Aorta (tissue), 5 donors: ENCODE measurements at regions of chr14 and their contacts with region 1.

Region 1: GRCh38 chr14:64117671-64118402 is 176.3 kb downstream of the ESR2 start:
- DNase-seq: peak; percentile 89 to 92
- ATAC-seq: peak; percentile 90
- H3K4me3 ChIP-seq: no peak overlapping the region
- H3K27ac ChIP-seq: peak overlapping the region; percentile 93 to 94
- H3K4me1 ChIP-seq: peaks cover 0 to 11% of the 10 kb centered on the region in 2 donors
- H3K27me3 ChIP-seq: no peaks in the 10 kb centered on the region

Region 2: GRCh38 chr14:64040044-64040443 is 77.8 kb before region 1 on chr14:
- intact Hi-C with region 1: loop called in 1 of 2 experiments (anchors 5 kb)
- DNase-seq: no peak
- ATAC-seq: no peak
- H3K4me3 ChIP-seq: no peak overlapping the region
- H3K27ac ChIP-seq: no peak overlapping the region
- H3K4me1 ChIP-seq: peaks cover 0 to 3% of the 10 kb centered on the region in 2 donors
- H3K27me3 ChIP-seq: no peaks in the 10 kb centered on the region

Region 3: DNA sequence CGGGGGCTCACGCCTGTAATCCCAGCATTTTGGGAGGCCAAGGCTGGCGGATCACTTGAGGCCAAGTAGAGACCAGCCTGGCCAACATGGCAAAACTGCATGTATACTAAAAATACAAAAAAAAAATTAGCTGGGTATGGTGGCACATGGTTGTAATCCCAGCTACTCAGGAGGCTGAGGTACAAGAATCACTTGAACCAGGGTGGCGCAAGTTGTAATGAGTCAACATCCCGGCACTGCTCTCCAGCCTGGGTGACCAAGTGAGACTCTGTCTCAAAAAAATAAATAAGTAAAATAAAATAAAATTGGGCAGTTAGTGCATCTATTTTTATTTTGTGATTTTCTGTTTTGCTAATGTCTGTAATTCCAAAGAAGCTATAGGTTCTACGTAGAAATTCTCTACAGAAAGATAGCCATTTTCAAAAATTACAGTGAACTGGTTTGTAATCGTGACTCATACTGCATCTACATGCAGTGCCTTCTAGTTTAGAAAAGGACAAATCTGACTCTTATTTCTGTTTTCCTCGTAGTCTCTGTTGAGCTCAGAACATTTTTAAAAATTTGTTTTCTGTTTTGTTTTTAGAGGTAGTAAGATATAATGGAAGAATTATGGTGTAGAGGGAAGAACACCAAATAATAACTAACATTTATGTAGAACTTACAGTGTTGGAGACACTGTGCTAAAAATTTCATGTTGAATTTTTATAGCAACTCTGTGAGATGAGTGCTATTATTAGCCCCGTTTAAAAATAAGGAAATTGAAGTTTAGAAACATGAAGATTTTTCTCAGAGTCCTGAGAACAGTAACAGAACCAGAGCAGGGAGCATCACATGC is 63.9 kb before region 1 on chr14:
- intact Hi-C with region 1: loop called (anchors 5 kb)
- DNase-seq: no peak
- ATAC-seq: peak; percentile 56
- H3K4me3 ChIP-seq: no peak overlapping the region
- H3K27ac ChIP-seq: peak overlapping the region; percentile 76 to 82
- H3K4me1 ChIP-seq: no peaks in the 10 kb centered on the region
- H3K27me3 ChIP-seq: no peaks in the 10 kb centered on the region

Region 4: DNA sequence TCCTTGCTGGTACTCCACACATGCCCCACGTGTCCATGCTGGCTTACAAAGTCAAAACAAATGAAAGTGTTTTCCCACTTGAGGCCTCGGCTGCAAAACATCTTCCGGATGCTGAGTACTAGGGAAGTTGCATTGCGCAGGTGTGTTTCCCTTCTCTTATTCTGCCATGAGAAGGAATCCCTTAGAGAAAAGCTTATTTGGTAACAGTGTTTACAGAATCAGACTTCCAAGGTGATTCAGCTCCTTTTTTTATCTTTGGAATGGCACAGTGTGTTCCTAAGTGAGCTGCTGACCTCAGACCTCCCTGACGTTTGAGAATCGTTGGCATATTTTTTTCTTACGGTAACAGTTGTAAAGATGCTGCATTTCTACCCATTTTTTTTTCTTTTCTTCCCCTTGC is 35.0 kb before region 1 on chr14:
- intact Hi-C with region 1: loop called (anchors 2 to 5 kb)
- DNase-seq: no peak
- ATAC-seq: peak; percentile 68
- H3K4me3 ChIP-seq: no peak overlapping the region
- H3K27ac ChIP-seq: peak overlapping the region; percentile 96 to 100
- H3K4me1 ChIP-seq: peaks cover 5% of the 10 kb centered on the region in 2 donors
- H3K27me3 ChIP-seq: no peaks in the 10 kb centered on the region

Region 5: DNA sequence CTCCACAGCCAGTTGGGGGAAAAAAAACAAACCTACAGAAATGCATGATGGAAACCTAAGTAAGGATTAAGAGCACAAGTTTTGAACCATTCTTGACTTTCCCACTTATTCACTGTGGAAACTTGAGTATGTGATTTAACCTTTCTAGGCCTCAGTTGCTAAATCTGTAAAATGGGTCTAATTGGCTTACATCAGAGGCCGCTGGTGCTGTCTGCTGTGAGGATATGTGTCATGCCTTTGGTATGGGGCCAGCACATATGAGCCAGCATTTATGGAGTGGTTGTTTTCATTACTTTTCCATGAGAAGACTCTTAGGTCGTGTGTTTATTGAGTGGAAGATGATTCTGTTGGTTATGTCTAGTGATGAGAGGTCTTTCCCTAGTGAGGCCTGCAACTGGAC is 73.9 kb after region 1 on chr14:
- intact Hi-C with region 1: no loop called
- DNase-seq: no peak
- ATAC-seq: no peak
- H3K4me3 ChIP-seq: no peak overlapping the region
- H3K27ac ChIP-seq: no peak overlapping the region
- H3K4me1 ChIP-seq: no peaks in the 10 kb centered on the region
- H3K27me3 ChIP-seq: no peaks in the 10 kb centered on the region